PC-9 (cell line): ENCODE measurements at regions of chr2 and their contacts with region 1.

Region 1: GRCh38 chr2:232327105-232328041 is 51.2 kb upstream of the ALPP start:
- DNase-seq: peak in 1 of 2 experiments; percentile 66
- H3K4me3 ChIP-seq: no peak overlapping the region
- H3K27ac ChIP-seq: no peak overlapping the region
- H3K4me1 ChIP-seq: no peaks in the 10 kb centered on the region
- H3K27me3 ChIP-seq: no peaks in the 10 kb centered on the region
- CTCF ChIP-seq: peak; percentile 86

Region 2: GRCh38 chr2:231925303-231926179 is 401.8 kb before region 1 on chr2:
- CTCF ChIA-PET with region 1: interaction called, 3 read pairs
- POLR2A ChIA-PET with region 1: no interaction called
- intact Hi-C with region 1: loop called (anchors 2 kb)
- DNase-seq: peak in 1 of 2 experiments; percentile 72
- H3K4me3 ChIP-seq: no peak overlapping the region
- H3K27ac ChIP-seq: no peak overlapping the region
- H3K4me1 ChIP-seq: no peaks in the 10 kb centered on the region
- H3K27me3 ChIP-seq: peaks cover 22% of the 10 kb centered on the region
- CTCF ChIP-seq: peak; percentile 77

Region 3: GRCh38 chr2:232339121-232340081 is 12.0 kb after region 1 on chr2:
- CTCF ChIA-PET with region 1: no interaction called
- POLR2A ChIA-PET with region 1: no interaction called
- intact Hi-C with region 1: no loop called
- DNase-seq: no peak
- H3K4me3 ChIP-seq: no peak overlapping the region
- H3K27ac ChIP-seq: no peak overlapping the region
- H3K4me1 ChIP-seq: no peaks in the 10 kb centered on the region
- H3K27me3 ChIP-seq: no peaks in the 10 kb centered on the region
- CTCF ChIP-seq: peak; percentile 17; the same call in 1 of the 2 replicates

Region 4: DNA sequence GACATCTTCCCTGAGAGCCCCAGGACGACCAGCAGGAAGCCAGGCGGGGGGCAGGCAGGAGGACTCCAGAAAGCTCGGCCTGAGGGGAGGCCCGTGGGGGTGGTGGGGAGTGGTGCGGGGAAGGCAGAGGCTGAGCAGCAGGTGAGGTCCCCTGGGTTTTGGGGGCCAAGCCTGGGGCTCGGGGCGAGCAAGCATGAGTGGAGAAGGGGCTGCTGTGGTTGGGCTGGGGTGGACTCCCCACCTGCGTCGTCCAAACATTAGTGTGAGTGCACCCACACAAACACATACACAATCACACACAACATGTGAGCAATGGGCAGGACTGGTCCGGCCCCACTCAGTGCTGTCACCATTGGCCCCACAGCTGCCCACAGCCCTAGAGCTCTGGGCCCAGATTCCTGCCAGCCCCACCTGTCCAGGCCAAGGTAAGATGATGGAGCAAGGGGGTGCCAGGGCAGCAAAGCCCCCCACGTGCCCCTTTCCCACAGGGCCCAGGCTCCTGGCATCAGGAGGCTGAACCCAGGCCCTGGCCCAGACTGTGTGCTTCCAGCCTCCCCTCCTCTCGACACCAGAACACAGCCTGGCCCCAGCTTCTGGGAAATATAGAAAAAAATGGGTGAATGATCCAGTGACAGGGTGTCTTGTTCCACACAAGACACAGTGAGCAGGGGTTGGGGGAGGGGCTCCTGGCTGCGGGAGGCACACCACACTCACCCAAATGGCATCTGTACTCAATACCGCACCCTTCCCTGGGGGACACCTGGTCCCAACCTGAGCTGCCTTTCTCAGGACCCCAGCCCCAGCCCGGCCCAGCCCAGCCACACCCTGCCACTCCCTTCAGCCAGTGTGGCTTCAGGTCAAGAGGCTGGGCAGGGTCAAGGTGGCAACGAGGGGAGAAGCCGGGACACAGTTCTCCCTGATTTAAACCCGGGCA is 50.7 kb after region 1 on chr2:
- CTCF ChIA-PET with region 1: no interaction called
- POLR2A ChIA-PET with region 1: no interaction called
- intact Hi-C with region 1: loop called (anchors 1 kb)
- DNase-seq: peak; percentile 89 to 94
- H3K4me3 ChIP-seq: no peak overlapping the region
- H3K27ac ChIP-seq: peak overlapping the region; percentile 54
- H3K4me1 ChIP-seq: peaks cover 20% of the 10 kb centered on the region
- H3K27me3 ChIP-seq: no peaks in the 10 kb centered on the region
- CTCF ChIP-seq: no peak

Region 5: DNA sequence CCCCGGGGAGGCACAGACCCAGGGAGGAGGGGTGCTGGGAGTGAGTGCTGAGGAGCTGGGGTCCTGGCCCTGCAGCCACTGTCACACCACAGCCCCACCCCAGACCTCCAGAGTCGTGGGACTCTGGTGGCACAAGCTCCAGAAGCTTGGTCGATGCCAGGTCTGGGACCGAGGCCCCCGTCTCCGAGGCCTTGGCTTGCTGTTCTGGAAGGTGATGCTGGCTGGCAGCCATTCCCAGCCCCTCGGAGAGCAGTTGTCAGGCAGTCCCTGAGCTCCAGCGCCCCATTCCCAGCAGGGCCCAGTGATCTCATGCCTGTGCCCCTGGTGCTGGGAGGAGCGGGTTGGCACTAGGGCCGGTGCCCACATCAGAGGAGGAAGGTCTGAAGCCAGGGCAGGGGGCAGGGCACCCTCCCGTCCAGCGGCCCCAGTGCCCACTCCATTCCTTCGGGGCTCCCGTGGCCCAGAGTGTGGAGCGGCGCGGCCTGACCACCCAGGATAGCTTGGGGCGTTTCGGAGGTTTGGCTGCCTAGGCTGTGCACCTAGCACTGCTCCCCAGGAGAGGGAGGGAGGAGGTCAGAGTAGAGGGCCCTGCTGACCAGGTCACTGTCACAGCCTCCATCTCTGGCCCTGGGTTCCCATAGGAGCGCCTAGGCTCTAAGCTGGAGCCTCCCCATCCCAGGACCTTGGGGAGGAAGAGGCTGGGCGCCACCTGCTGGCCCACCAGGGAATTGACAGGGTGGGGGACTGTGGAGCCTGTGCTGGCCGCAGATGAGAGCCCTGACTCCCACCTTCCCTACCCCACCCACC is 111.8 kb after region 1 on chr2:
- CTCF ChIA-PET with region 1: no interaction called
- POLR2A ChIA-PET with region 1: no interaction called
- intact Hi-C with region 1: loop called (anchors 5 kb)
- DNase-seq: peak in 1 of 2 experiments; percentile 60
- H3K4me3 ChIP-seq: no peak overlapping the region
- H3K27ac ChIP-seq: no peak overlapping the region
- H3K4me1 ChIP-seq: peaks cover 10% of the 10 kb centered on the region
- H3K27me3 ChIP-seq: no peaks in the 10 kb centered on the region
- CTCF ChIP-seq: peak; percentile 65

Region 6: DNA sequence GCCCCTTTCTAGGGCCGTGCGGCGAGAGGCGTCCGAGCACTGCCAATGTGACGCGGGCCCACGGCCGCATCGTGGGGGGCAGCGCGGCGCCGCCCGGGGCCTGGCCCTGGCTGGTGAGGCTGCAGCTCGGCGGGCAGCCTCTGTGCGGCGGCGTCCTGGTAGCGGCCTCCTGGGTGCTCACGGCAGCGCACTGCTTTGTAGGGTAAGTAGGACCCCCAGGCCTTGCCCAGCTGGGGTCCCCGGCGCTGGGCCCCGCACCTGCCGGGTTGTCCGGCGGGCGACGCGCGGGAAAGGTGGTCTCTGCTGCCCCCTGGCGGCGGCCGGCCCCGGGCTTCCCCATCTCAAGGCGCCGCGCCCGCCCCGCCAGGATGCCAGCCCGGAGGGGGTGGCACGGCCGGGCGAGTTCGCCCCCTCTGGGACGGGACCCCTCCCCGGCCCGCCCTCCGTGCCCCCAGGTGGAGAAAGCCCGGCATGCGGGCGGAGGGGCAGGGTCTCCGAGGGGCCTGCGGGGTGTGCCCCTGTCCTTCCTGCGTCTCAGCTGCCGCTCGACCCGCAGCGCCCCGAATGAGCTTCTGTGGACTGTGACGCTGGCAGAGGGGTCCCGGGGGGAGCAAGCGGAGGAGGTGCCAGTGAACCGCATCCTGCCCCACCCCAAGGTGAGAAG is 194.7 kb after region 1 on chr2:
- CTCF ChIA-PET with region 1: no interaction called
- POLR2A ChIA-PET with region 1: no interaction called
- intact Hi-C with region 1: loop called (anchors 10 kb)
- DNase-seq: peak in 1 of 2 experiments; percentile 58
- H3K4me3 ChIP-seq: no peak overlapping the region
- H3K27ac ChIP-seq: no peak overlapping the region
- H3K4me1 ChIP-seq: no peaks in the 10 kb centered on the region
- H3K27me3 ChIP-seq: peaks cover 55% of the 10 kb centered on the region
- CTCF ChIP-seq: peak; percentile 75